ENCODE measurements at regions of chr7 and their contacts with region 1.

Region 1: GRCh38 chr7:101287032-101287431 is 34.6 kb downstream of the IFT22 start:
- DNase-seq: peak in 1 of 14 experiments; percentile 26
- ATAC-seq: no peak
- H3K4me3 ChIP-seq: no peak overlapping the region
- H3K4me3 Mint-ChIP-seq: no peak overlapping the region
- H3K27ac ChIP-seq: no peak overlapping the region
- H3K27ac Mint-ChIP-seq: no peak overlapping the region
- H3K4me1 ChIP-seq: peaks cover 13% of the 10 kb centered on the region
- H3K4me1 Mint-ChIP-seq: peaks cover 8% of the 10 kb centered on the region
- H3K27me3 ChIP-seq: peaks cover 4 to 6% of the 10 kb centered on the region in 2 experiments
- H3K27me3 Mint-ChIP-seq: peaks cover 26% of the 10 kb centered on the region
- CTCF ChIP-seq: no peak

Region 2: DNA sequence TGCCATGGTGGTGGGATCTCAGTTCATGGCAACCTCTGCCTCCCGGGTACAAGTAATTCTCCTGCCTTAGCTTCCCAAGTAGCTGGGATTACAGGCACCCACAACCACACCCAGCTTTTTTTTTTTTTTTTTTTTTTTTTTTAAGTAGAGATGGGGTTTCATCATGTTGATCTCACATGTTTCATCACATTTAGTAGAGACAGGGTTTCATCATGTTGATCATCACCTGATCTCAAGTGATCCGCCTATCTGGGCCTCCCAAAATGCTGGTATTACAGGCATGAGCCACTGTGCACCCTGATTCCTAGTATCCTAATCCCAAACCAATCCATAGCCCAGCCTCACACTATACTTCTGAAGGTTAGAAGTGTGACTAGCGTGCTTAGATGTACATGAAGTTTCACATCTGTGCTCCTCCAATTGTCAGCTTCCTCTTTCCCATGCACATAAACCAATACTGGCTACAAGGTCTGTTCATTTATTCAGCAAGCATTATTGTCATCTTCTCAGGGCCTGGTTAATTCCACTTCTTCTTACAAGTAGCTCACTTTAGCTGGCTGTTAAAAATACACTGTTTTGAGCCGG is 100.1 kb before region 1 on chr7:
- CTCF ChIA-PET with region 1: no interaction called
- POLR2A ChIA-PET with region 1: no interaction called
- intact Hi-C with region 1: loop called in 1 of 2 experiments (anchors 1 kb)
- DNase-seq: no peak
- ATAC-seq: no peak
- H3K4me3 ChIP-seq: no peak overlapping the region
- H3K4me3 Mint-ChIP-seq: no peak overlapping the region
- H3K27ac ChIP-seq: no peak overlapping the region
- H3K27ac Mint-ChIP-seq: no peak overlapping the region
- H3K4me1 ChIP-seq: peaks cover 4% of the 10 kb centered on the region
- H3K4me1 Mint-ChIP-seq: no peaks in the 10 kb centered on the region
- H3K27me3 ChIP-seq: peaks cover 8 to 14% of the 10 kb centered on the region in 2 experiments
- H3K27me3 Mint-ChIP-seq: peaks cover 35% of the 10 kb centered on the region
- CTCF ChIP-seq: no peak

Region 3: GRCh38 chr7:101442521-101442981 is 155.5 kb after region 1 on chr7:
- CTCF ChIA-PET with region 1: no interaction called
- POLR2A ChIA-PET with region 1: no interaction called
- intact Hi-C with region 1: loop called in 1 of 2 experiments (anchors 10 kb)
- DNase-seq: no peak
- ATAC-seq: no peak
- H3K4me3 ChIP-seq: no peak overlapping the region
- H3K4me3 Mint-ChIP-seq: no peak overlapping the region
- H3K27ac ChIP-seq: no peak overlapping the region
- H3K27ac Mint-ChIP-seq: no peak overlapping the region
- H3K4me1 ChIP-seq: no peaks in the 10 kb centered on the region
- H3K4me1 Mint-ChIP-seq: peaks cover 6% of the 10 kb centered on the region
- H3K27me3 ChIP-seq: peaks cover 0 to 3% of the 10 kb centered on the region in 2 experiments
- H3K27me3 Mint-ChIP-seq: peaks cover 16% of the 10 kb centered on the region
- CTCF ChIP-seq: no peak

Measured in CD4-positive, alpha-beta T cell (primary cell).